CD4-positive, alpha-beta memory T cell (primary cell): ENCODE measurements at regions of chr2 and their contacts with region 1.

Region 1: GRCh38 chr2:42328148-42328833 is 32.7 kb downstream of the COX7A2L start:
- DNase-seq: peak in 4 of 5 donors; percentile 31 to 37 (median 33)
- H3K4me3 ChIP-seq: no peak overlapping the region
- H3K4me3 Mint-ChIP-seq: no peak overlapping the region
- H3K27ac ChIP-seq: no peak overlapping the region
- H3K27ac Mint-ChIP-seq: peak overlapping the region; percentile 0 to 85 (median 62)
- H3K4me1 ChIP-seq: no peaks in the 10 kb centered on the region
- H3K4me1 Mint-ChIP-seq: peaks cover 2 to 9% (median 5%) of the 10 kb centered on the region in 4 donors
- H3K27me3 ChIP-seq: no peaks in the 10 kb centered on the region
- H3K27me3 Mint-ChIP-seq: no peaks in the 10 kb centered on the region

Region 2: GRCh38 chr2:41840702-41841551 is 487.4 kb before region 1 on chr2:
- CTCF ChIA-PET with region 1: no interaction called
- POLR2A ChIA-PET with region 1: no interaction called
- intact Hi-C with region 1: loop called (anchors 1 kb)
- DNase-seq: peak; percentile 97 to 98 (median 97)
- H3K4me3 ChIP-seq: peak overlapping the region; percentile 85 to 86
- H3K4me3 Mint-ChIP-seq: peak overlapping the region; percentile 90 to 100 (median 96)
- H3K27ac ChIP-seq: peak overlapping the region; percentile 75
- H3K27ac Mint-ChIP-seq: peak overlapping the region; percentile 85 to 98 (median 94)
- H3K4me1 ChIP-seq: peaks cover 10% of the 10 kb centered on the region
- H3K4me1 Mint-ChIP-seq: peaks cover 5 to 16% (median 11%) of the 10 kb centered on the region in 4 donors
- H3K27me3 ChIP-seq: peaks cover 3% of the 10 kb centered on the region
- H3K27me3 Mint-ChIP-seq: peaks cover 11 to 16% of the 10 kb centered on the region in 2 donors

Region 3: DNA sequence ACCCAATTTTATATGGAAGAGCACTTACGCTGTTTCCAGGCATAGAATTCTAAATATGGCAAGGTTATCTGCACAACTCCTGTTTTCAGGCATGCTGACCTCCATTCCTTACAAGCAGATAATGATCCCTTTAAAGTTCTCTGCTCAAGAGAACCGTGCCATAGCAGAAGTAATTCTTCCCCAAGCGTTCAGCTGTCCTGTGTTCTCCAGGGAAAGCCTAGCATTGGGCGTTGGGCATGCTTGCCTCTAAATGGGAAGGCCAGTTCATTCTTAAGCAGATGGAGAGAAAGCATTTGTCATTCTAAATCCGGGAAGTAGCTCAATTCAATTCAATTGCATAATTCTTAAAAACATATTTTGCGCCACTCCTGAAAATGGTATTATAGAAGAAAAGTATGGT is 214.8 kb before region 1 on chr2:
- CTCF ChIA-PET with region 1: no interaction called
- POLR2A ChIA-PET with region 1: no interaction called
- intact Hi-C with region 1: no loop called
- DNase-seq: no peak
- H3K4me3 ChIP-seq: no peak overlapping the region
- H3K4me3 Mint-ChIP-seq: peak overlapping the region in 1 of 8 donors; percentile 60
- H3K27ac ChIP-seq: no peak overlapping the region
- H3K27ac Mint-ChIP-seq: no peak overlapping the region
- H3K4me1 ChIP-seq: peaks cover 83% of the 10 kb centered on the region
- H3K4me1 Mint-ChIP-seq: peaks cover 38 to 63% (median 50%) of the 10 kb centered on the region in 4 donors
- H3K27me3 ChIP-seq: no peaks in the 10 kb centered on the region
- H3K27me3 Mint-ChIP-seq: no peaks in the 10 kb centered on the region

Region 4: GRCh38 chr2:42238644-42239288 is 89.5 kb before region 1 on chr2:
- CTCF ChIA-PET with region 1: interaction called, 10 read pairs
- POLR2A ChIA-PET with region 1: interaction called, 4 read pairs
- intact Hi-C with region 1: no loop called
- DNase-seq: peak; percentile 40 to 51 (median 48)
- H3K4me3 ChIP-seq: no peak overlapping the region
- H3K4me3 Mint-ChIP-seq: peak overlapping the region in 5 of 8 donors; percentile 20 to 51 (median 39)
- H3K27ac ChIP-seq: no peak overlapping the region
- H3K27ac Mint-ChIP-seq: peak overlapping the region in 6 of 7 donors; percentile 43 to 80 (median 64)
- H3K4me1 ChIP-seq: peaks cover 99% of the 10 kb centered on the region
- H3K4me1 Mint-ChIP-seq: peaks cover 64 to 92% (median 81%) of the 10 kb centered on the region in 4 donors
- H3K27me3 ChIP-seq: no peaks in the 10 kb centered on the region
- H3K27me3 Mint-ChIP-seq: no peaks in the 10 kb centered on the region

Region 5: DNA sequence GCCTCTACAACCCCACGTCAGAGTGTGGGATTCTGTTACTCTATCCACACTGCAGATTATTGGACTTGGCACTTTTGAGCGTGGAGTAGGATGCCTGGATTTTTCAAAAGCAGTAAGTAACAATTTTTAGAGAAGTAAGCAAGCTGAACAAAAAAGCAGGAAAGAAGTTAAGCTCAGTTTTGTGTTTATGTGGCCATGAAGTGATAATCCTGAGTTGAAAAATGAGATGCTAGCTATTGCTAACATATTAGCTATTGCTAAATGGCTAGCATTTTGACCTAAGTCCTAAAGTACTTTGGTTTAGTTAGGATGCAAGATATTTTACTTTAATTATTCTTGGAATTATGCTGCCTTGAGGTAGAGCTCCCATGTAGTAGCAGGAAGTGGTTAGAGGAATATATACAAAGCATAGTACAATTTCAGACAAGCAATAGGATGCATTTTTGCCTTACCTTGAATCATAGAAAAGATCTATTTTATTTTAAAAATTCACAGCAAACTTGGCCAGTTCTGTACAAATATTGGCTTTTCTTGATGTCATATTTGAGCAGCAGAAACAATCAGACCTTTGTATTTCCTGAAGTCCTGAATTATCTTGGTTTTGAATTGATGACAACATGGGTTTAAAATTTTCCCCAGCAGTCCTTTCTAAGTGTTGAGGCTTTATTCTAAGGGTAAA is 41.9 kb before region 1 on chr2:
- CTCF ChIA-PET with region 1: interaction called, 8 read pairs
- POLR2A ChIA-PET with region 1: no interaction called
- intact Hi-C with region 1: loop called (anchors 5 kb)
- DNase-seq: no peak
- H3K4me3 ChIP-seq: no peak overlapping the region
- H3K4me3 Mint-ChIP-seq: peak overlapping the region in 3 of 8 donors; percentile 3 to 47 (median 3)
- H3K27ac ChIP-seq: no peak overlapping the region
- H3K27ac Mint-ChIP-seq: peak overlapping the region; percentile 45 to 93 (median 60)
- H3K4me1 ChIP-seq: peaks cover 34% of the 10 kb centered on the region
- H3K4me1 Mint-ChIP-seq: peaks cover 28 to 45% (median 34%) of the 10 kb centered on the region in 4 donors
- H3K27me3 ChIP-seq: no peaks in the 10 kb centered on the region
- H3K27me3 Mint-ChIP-seq: no peaks in the 10 kb centered on the region